ENCODE measurements at regions of chr19 and their contacts with region 1.

Region 1: DNA sequence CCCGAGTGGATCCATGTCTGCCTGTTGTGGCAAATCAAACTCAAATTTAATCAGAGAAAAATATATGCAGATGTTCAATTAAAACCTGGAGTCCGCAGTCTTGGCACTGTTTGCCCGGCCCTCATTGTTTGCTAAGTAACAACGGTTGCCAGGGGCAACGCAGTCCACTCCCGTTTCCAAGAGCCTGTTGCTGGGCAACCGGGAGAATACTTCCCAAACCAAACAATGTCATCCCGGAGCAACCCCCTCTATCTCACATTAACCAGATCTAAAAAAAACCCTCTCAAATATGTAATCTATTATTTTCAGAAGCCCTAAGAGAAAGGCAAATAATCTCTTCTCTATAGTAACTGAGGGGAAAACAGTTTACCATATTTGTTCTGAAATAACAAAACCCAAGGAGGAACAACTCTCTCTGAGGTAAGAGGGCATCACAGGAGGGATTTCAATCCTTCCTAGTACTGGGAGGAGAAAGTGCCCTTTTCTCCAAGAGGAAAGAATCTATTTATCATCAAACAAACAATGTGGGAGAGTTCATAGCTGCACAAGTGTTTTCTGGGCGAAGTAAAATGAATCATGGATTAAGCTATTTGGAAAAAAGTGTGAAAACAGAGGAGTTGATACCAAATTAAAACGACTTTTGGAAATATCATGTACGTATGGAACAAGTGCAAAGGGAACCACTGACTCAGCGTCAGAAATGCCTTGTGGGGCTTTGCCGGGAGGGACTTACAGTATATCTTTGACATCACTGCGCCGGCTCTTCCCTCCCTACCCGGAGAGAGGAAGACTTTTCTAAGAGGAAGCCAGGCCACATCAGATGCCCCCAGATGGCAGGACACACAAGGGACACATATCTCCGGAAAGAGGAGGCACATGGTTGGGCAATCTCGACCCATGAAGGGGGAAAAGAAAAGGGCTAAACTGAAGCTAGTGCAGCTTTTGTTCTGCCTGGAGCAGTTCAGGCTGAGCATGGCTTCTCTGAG is 43.3 kb downstream of the RFX2 start:
- DNase-seq: no peak
- H3K4me3 Mint-ChIP-seq: no peak overlapping the region
- H3K27ac Mint-ChIP-seq: peak overlapping the region; percentile 1
- H3K4me1 Mint-ChIP-seq: peaks cover 40% of the 10 kb centered on the region
- H3K27me3 Mint-ChIP-seq: no peaks in the 10 kb centered on the region

Region 2: GRCh38 chr19:5889288-5889971 is 177.5 kb before region 1 on chr19:
- intact Hi-C with region 1: no loop called
- DNase-seq: no peak
- H3K4me3 Mint-ChIP-seq: no peak overlapping the region
- H3K27ac Mint-ChIP-seq: no peak overlapping the region
- H3K4me1 Mint-ChIP-seq: no peaks in the 10 kb centered on the region
- H3K27me3 Mint-ChIP-seq: peaks cover 2% of the 10 kb centered on the region

Region 3: DNA sequence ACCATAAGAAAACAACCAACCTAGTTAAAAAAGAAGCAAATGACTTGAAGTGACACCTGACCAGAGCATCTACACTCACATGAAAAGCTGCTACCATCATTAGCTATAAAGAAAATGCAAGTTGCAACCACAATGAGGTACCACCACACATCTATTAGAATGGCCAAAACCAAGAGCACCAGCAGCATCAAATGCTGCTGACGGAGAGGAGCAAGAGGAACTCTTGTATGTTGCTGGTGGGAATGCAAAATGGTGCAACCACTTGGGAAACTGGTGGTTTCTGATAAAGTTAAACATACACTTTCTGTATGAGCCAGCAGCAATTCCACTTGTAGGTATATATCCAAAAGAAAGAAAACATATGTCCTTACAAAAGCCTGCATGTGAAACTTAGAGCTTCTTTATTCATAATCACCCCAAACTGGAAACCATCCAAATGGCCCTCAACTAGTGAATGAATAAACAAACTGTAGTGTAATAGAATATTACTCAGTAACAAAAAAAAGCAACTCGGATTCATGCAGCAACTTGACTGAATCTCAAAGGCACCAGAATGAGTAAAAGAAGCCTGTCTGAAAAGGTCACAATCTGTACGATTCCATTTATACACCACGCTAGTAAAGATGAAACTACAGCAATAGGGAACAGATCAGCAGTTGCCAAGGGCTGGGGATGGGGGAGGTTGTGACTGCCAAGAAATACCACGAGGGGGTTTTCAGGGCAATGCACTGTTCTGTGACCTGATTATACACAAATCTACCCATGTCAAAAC is 28.1 kb before region 1 on chr19:
- intact Hi-C with region 1: loop called (anchors 1 kb)
- DNase-seq: no peak
- H3K4me3 Mint-ChIP-seq: no peak overlapping the region
- H3K27ac Mint-ChIP-seq: peak overlapping the region; percentile 92
- H3K4me1 Mint-ChIP-seq: peaks cover 14% of the 10 kb centered on the region
- H3K27me3 Mint-ChIP-seq: no peaks in the 10 kb centered on the region

Region 4: GRCh38 chr19:6110360-6110977 is 43.5 kb after region 1 on chr19 and contains the start of gene RFX2:
- intact Hi-C with region 1: loop called (anchors 1 kb)
- DNase-seq: peak; percentile 99
- H3K4me3 Mint-ChIP-seq: peak within 1 kb of the TSS; percentile 86
- H3K27ac Mint-ChIP-seq: peak within 1 kb of the TSS; percentile 79
- H3K4me1 Mint-ChIP-seq: peaks cover 27% of the 10 kb centered on the region
- H3K27me3 Mint-ChIP-seq: peaks cover 17% of the 10 kb centered on the region
- total RNA-seq, gene RFX2: 9.2 and 10.2 TPM in 2 replicates

Region 5: DNA sequence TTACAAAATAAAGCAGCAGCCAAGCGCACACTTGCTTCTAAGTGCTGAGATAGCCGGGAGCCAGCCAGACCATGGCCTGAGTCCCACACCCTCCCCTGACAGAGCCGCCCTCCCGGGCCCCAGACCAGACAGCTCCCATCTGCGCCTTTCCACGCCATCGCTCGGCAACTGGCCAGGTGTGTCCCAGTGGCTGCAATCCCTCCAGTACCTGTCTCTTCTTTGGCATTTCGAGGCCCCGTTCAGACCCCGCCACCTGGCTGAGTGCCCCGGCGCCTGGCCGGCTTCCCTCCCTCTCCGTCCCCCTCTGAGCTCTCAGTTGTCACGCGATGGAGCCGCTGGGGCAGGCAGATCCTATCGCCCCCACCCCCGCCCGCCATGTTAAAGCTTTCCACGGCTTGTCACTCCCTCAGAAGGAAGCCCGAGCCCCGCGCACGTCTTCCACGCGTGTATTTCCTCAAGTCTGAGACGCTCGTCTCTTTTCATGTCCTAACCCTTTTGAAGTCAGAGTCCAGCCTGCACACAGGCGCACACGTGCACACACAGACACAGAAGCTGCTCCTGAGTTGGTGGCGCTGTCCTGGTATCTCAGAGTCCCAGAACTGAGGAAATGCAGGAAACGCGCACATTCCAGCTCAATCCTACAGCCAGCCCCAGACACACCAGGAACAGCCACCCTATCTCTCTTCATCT is 204.9 kb after region 1 on chr19:
- intact Hi-C with region 1: no loop called
- DNase-seq: no peak
- H3K4me3 Mint-ChIP-seq: no peak overlapping the region
- H3K27ac Mint-ChIP-seq: no peak overlapping the region
- H3K4me1 Mint-ChIP-seq: peaks cover 11% of the 10 kb centered on the region
- H3K27me3 Mint-ChIP-seq: no peaks in the 10 kb centered on the region

Measured in activated T-helper 1 cell treated with anti-CD3 and anti-CD28 coated beads, Interleukin-12 subunit alpha, Interleukin-12 subunit beta, Interleukin-2, Interleukin-4 antibody, amounts not matched to agents 30 ng/mL and 10 ng/mL and 1 ng/mL, durations not matched to agents 14 hours and 24 hours and 36 hours (primary cell).